ENCODE measurements at regions of chr4 and their contacts with region 1.

Region 1: DNA sequence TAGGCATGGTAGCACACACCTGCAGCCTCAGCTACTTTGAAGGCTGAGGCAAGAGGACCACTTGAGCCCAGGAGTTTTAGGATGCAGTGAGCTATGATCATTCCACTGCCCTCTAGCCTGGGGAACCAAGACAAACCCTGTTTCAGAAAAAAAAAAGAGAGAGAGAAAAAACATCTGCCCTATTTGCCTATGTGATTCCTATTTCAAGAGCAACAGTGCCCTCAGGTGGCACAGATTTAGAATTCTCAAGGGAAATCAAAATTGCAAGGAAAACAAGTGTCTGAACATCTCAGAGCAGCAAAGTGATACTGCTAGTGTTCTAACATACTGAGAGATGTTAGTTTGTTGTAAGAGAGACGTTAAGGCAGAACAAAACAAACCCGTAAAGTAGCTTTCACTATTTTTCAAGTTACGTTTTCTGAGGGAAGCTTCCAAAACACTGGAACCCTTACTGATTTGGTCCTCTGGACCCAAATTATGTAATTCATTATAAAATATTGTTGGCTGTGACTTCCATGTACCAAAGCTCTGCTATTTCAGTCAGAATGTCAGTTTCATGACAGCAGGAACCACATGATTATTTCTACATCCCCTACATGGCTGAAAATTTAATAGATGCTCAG is 7.9 kb downstream of the BDH2 start:
- DNase-seq: peak; percentile 82
- ATAC-seq: peak; percentile 89
- H3K4me3 ChIP-seq: no peak overlapping the region
- H3K4me3 Mint-ChIP-seq: no peak overlapping the region
- H3K27ac ChIP-seq: no peak overlapping the region
- H3K27ac Mint-ChIP-seq: no peak overlapping the region
- H3K4me1 ChIP-seq: peaks cover 0 to 9% of the 10 kb centered on the region in 2 donors
- H3K4me1 Mint-ChIP-seq: peaks cover 12% of the 10 kb centered on the region
- H3K27me3 ChIP-seq: no peaks in the 10 kb centered on the region
- H3K27me3 Mint-ChIP-seq: no peaks in the 10 kb centered on the region
- CTCF ChIP-seq: peak; percentile 89

Region 2: DNA sequence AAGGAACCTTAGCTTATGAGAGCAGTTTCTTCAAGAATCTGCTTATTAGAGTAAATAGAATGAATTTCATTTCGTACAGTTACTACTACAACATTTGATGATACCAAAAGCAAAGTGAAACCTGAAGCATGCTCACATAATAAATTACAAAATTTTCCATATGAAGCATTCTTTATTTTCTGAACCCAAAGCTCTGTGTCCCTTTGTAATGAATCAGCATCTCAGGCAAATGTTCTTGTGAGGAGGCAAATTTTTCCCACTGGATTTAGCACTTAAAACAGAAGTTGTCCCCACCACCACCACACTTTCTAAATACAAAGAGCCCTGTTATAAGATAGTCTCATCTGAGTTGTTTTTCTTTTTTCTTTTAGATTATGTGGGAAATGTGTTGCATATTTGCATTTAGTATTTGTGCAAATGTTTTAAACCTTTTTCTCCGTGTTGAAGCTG is 661.2 kb before region 1 on chr4:
- CTCF ChIA-PET with region 1: interaction called, 7 read pairs
- POLR2A ChIA-PET with region 1: interaction called, 3 read pairs
- intact Hi-C with region 1: loop called (anchors 1 kb)
- DNase-seq: no peak
- ATAC-seq: no peak
- H3K4me3 ChIP-seq: peak overlapping the region; percentile 48 to 79 (median 61)
- H3K4me3 Mint-ChIP-seq: peak overlapping the region; percentile 91
- H3K27ac ChIP-seq: peak overlapping the region in 1 of 2 donors; percentile 38
- H3K27ac Mint-ChIP-seq: peak overlapping the region; percentile 59
- H3K4me1 ChIP-seq: peaks cover 0 to 5% of the 10 kb centered on the region in 2 donors
- H3K4me1 Mint-ChIP-seq: peaks cover 5% of the 10 kb centered on the region
- H3K27me3 ChIP-seq: no peaks in the 10 kb centered on the region
- H3K27me3 Mint-ChIP-seq: no peaks in the 10 kb centered on the region
- CTCF ChIP-seq: no peak

Region 3: GRCh38 chr4:102620697-102621497 is 470.8 kb before region 1 on chr4:
- CTCF ChIA-PET with region 1: interaction called, 14 read pairs
- POLR2A ChIA-PET with region 1: no interaction called
- intact Hi-C with region 1: loop called (anchors 5 kb)
- DNase-seq: peak; percentile 37
- ATAC-seq: peak; percentile 57
- H3K4me3 ChIP-seq: no peak overlapping the region
- H3K4me3 Mint-ChIP-seq: no peak overlapping the region
- H3K27ac ChIP-seq: no peak overlapping the region
- H3K27ac Mint-ChIP-seq: no peak overlapping the region
- H3K4me1 ChIP-seq: peaks cover 3 to 6% of the 10 kb centered on the region in 2 donors
- H3K4me1 Mint-ChIP-seq: peaks cover 9% of the 10 kb centered on the region
- H3K27me3 ChIP-seq: no peaks in the 10 kb centered on the region
- H3K27me3 Mint-ChIP-seq: no peaks in the 10 kb centered on the region
- CTCF ChIP-seq: peak; percentile 30

Region 4: DNA sequence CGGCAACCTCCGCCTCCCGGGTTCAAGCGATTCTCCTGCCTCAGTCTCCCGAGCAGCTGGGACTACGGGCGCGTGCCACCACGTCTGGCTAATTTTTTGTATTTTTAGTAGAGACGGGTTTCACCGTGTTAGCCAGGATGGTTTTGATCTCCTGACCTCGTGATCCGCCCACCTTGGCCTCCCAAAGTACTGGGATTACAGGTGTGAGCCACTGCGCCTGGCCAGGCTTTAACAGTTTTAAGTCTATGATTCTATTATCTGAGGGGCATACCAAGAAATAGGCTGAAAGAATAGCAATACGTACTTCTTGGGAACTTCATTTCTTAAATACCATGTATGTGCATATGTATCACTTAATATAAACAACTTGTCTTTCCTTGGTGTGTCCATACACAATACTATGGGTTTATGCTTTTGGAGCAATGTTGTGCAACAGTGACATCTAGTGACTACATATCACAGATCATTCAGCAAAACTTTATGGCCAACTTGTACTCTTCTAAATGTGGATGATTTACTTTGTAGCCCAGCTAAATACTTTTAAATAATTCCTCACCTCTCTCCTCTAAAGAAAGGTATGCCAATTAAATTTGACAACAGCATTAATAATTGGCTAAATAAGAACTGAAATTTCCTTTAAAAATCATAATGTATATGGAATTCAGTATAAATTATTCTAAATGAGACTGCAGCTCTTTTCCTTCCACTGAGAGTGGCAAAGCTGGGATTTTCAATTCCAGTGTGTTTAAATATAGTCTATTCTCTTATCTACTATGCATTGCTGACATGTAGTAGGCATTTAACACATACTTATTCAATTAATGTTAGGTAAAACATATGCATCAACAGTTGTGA is 82.6 kb before region 1 on chr4:
- CTCF ChIA-PET with region 1: interaction called, 29 read pairs
- POLR2A ChIA-PET with region 1: no interaction called
- intact Hi-C with region 1: loop called (anchors 1 kb)
- DNase-seq: peak; percentile 79
- ATAC-seq: peak; percentile 67
- H3K4me3 ChIP-seq: no peak overlapping the region
- H3K4me3 Mint-ChIP-seq: no peak overlapping the region
- H3K27ac ChIP-seq: no peak overlapping the region
- H3K27ac Mint-ChIP-seq: no peak overlapping the region
- H3K4me1 ChIP-seq: no peaks in the 10 kb centered on the region
- H3K4me1 Mint-ChIP-seq: no peaks in the 10 kb centered on the region
- H3K27me3 ChIP-seq: no peaks in the 10 kb centered on the region
- H3K27me3 Mint-ChIP-seq: no peaks in the 10 kb centered on the region
- CTCF ChIP-seq: peak; percentile 87

Region 5: GRCh38 chr4:103046416-103047290 is 45.1 kb before region 1 on chr4:
- CTCF ChIA-PET with region 1: interaction called, 117 read pairs
- POLR2A ChIA-PET with region 1: interaction called, 4 read pairs
- intact Hi-C with region 1: loop called (anchors 1 kb)
- DNase-seq: peak; percentile 66
- ATAC-seq: peak; percentile 97
- H3K4me3 ChIP-seq: no peak overlapping the region
- H3K4me3 Mint-ChIP-seq: peak overlapping the region; percentile 54
- H3K27ac ChIP-seq: no peak overlapping the region
- H3K27ac Mint-ChIP-seq: peak overlapping the region; percentile 71
- H3K4me1 ChIP-seq: no peaks in the 10 kb centered on the region
- H3K4me1 Mint-ChIP-seq: peaks cover 9% of the 10 kb centered on the region
- H3K27me3 ChIP-seq: no peaks in the 10 kb centered on the region
- H3K27me3 Mint-ChIP-seq: no peaks in the 10 kb centered on the region
- CTCF ChIP-seq: peak; percentile 92

Measured in B cell (primary cell).